ENCODE measurements at regions of chr14 and their contacts with region 1.

Region 1: GRCh38 chr14:92135267-92135666 is 13.5 kb downstream of the CPSF2 start:
- DNase-seq: peak in 1 of 2 experiments; percentile 29
- H3K4me3 ChIP-seq: no peak overlapping the region
- H3K4me1 ChIP-seq: no peaks in the 10 kb centered on the region
- H3K27me3 ChIP-seq: no peaks in the 10 kb centered on the region

Region 2: DNA sequence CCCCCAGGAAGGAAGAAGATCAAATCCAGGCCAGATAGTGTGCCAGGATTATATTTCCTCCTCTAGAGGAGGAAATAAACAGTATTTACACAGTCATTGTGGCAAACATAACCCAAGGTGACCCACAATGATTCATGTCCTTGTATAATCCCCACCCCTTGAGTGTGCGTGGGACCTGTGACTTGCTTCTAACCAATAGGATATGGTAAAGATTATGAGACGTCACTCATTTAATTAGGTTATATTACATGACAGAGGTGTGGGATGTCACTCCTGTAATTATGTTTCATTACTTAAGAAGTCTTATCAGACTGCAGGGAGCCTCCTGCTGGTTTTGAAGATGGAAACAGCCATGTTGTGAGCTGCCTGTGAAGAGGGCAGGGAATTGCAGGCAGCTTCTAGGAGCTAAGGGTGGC is 391.2 kb before region 1 on chr14:
- in situ Hi-C with region 1: no loop called
- DNase-seq: no peak
- H3K4me3 ChIP-seq: no peak overlapping the region
- H3K4me1 ChIP-seq: no peaks in the 10 kb centered on the region
- H3K27me3 ChIP-seq: no peaks in the 10 kb centered on the region

Region 3: GRCh38 chr14:92352158-92352985 is 217.1 kb after region 1 on chr14:
- in situ Hi-C with region 1: no loop called
- DNase-seq: peak; percentile 30 to 57
- H3K4me3 ChIP-seq: no peak overlapping the region
- H3K4me1 ChIP-seq: no peaks in the 10 kb centered on the region
- H3K27me3 ChIP-seq: 0 out of 2 replicates have a peak, but pooled peaks cover 2% of the 10 kb centered on the region

Region 4: GRCh38 chr14:92686900-92687444 is 551.7 kb after region 1 on chr14:
- in situ Hi-C with region 1: loop called (anchors 25 kb)
- DNase-seq: peak; percentile 63 to 89
- H3K4me3 ChIP-seq: no peak overlapping the region
- H3K4me1 ChIP-seq: no peaks in the 10 kb centered on the region
- H3K27me3 ChIP-seq: no peaks in the 10 kb centered on the region